Activated B cell treated with CpG ODN at 0.5 μM for 24 hours (primary cell): ENCODE measurements at regions of chr10 and their contacts with region 1.

Region 1: GRCh38 chr10:22666287-22667092 is 47.9 kb downstream of the PIP4K2A start:
- DNase-seq: no peak
- ATAC-seq: peak; percentile 68
- H3K4me3 Mint-ChIP-seq: peak overlapping the region; percentile 59
- H3K27ac Mint-ChIP-seq: peak overlapping the region; percentile 64
- H3K4me1 Mint-ChIP-seq: peaks cover 70% of the 10 kb centered on the region
- H3K27me3 Mint-ChIP-seq: no peaks in the 10 kb centered on the region
- CTCF ChIP-seq: no peak

Region 2: GRCh38 chr10:22544325-22545068 is 122.0 kb before region 1 on chr10:
- CTCF ChIA-PET with region 1: no interaction called
- POLR2A ChIA-PET with region 1: no interaction called
- intact Hi-C with region 1: no loop called
- DNase-seq: no peak
- ATAC-seq: no peak
- H3K4me3 Mint-ChIP-seq: no peak overlapping the region
- H3K27ac Mint-ChIP-seq: no peak overlapping the region
- H3K4me1 Mint-ChIP-seq: no peaks in the 10 kb centered on the region
- H3K27me3 Mint-ChIP-seq: no peaks in the 10 kb centered on the region
- CTCF ChIP-seq: no peak

Region 3: GRCh38 chr10:22615819-22616499 is 50.5 kb before region 1 on chr10:
- CTCF ChIA-PET with region 1: no interaction called
- POLR2A ChIA-PET with region 1: interaction called, 10 read pairs
- intact Hi-C with region 1: no loop called
- DNase-seq: peak; percentile 36
- ATAC-seq: peak; percentile 74
- H3K4me3 Mint-ChIP-seq: peak overlapping the region; percentile 86
- H3K27ac Mint-ChIP-seq: peak overlapping the region; percentile 96
- H3K4me1 Mint-ChIP-seq: peaks cover 95% of the 10 kb centered on the region
- H3K27me3 Mint-ChIP-seq: no peaks in the 10 kb centered on the region
- CTCF ChIP-seq: no peak

Region 4: GRCh38 chr10:22655311-22655981 is 11.0 kb before region 1 on chr10:
- CTCF ChIA-PET with region 1: interaction called, 3 read pairs
- POLR2A ChIA-PET with region 1: interaction called, 3 read pairs
- intact Hi-C with region 1: loop called (anchors 1 kb)
- DNase-seq: no peak
- ATAC-seq: peak; percentile 41
- H3K4me3 Mint-ChIP-seq: peak overlapping the region; percentile 35
- H3K27ac Mint-ChIP-seq: peak overlapping the region; percentile 72
- H3K4me1 Mint-ChIP-seq: peaks cover 98% of the 10 kb centered on the region
- H3K27me3 Mint-ChIP-seq: no peaks in the 10 kb centered on the region
- CTCF ChIP-seq: no peak